Sigmoid colon (tissue), 7 donors: ENCODE measurements at regions of chr12 and their contacts with region 1.

Region 1: DNA sequence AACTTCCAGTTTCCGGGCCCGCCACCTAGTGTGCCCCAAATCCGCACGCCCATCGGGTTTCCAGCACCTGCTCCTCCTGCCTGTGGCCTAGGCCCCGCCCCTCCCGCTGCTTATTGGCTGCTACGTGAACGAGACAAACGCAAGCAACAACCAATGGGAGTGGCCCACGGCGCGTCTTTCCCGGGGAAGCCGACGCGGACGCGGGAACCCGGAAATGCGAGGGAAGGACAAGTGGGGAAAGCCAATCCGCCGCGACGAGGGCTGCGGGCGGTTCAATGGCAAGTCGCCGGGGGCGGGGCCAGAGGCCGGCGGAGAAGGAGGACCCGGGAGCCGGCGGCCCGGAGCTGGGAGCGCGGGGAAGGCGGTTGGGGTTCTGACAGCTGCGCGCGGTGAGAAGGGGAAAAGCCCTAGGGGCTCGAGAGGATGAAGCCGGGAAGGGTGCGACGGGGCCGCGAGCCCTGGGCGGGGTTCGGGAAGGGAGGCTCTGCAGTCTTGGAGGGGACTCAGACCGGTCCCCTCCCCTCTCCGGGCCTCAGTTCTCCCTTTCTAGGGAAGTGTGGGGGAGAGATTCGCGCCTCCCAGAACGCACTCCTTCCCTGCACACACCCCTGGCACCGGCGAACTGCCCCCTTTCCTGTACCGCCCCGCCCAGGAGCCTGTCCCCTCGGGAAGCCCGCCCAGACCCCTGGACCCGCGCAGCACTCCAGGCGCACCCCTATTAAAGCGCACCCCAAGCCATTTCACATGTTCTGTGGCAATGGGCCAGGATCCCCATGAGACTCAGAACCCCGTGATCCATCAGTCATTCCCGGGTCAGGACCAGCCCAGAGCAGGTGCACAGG is at the start of gene FICD:
- DNase-seq: peak; percentile 100
- H3K4me3 ChIP-seq: peak within 1 kb of the TSS; percentile 65 to 94 (median 80)
- H3K27ac ChIP-seq: peak within 1 kb of the TSS; percentile 76 to 88 (median 84)
- H3K4me1 ChIP-seq: peaks cover 0 to 22% (median 17%) of the 10 kb centered on the region in 4 donors
- H3K27me3 ChIP-seq: no peaks in the 10 kb centered on the region
- CTCF ChIP-seq: no peak
- EP300 ChIP-seq: no peak
- POLR2A ChIP-seq: peak in 1 of 2 donors; percentile 13
- total RNA-seq, gene FICD: 2.9 to 5.4 (median 4.1) TPM

Region 2: DNA sequence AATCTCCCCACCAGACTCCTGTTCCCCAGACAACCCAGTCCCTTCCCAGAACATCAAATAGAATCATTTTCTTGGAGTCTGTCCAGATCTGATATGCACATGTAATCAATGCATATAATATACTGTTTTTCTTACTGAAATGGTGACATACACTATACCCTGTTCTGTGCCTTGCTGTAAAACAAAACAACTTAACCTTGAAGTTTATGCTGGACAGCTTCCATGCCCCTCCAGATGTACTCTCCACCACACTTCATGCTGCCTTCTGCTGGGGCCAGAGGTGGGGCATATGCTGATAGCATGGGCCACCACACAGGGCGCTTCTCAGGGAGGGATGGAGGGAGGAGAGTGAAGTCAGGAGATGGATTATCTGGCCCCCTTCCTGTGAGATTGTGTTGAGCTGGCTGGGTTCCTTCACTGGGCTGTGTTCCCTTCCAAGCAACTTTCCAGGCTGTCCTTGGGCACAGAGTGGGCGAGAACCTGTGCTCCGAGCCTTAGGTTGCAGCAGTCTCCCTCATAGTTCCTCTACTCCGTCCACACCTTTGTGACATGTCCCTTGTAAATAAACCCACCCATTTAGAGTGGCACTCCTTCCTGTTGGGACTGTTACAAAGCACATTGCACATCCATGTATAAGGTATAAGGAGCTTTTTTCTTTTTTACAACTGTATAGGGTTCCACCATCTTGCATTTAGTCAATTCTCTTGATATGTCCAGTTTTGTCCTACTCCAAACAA is 1818.3 kb before region 1 on chr12:
- intact Hi-C with region 1: no loop called
- DNase-seq: no peak
- H3K4me3 ChIP-seq: no peak overlapping the region
- H3K27ac ChIP-seq: no peak overlapping the region
- H3K4me1 ChIP-seq: no peaks in the 10 kb centered on the region
- H3K27me3 ChIP-seq: no peaks in the 10 kb centered on the region
- CTCF ChIP-seq: no peak
- EP300 ChIP-seq: no peak
- POLR2A ChIP-seq: no peak

Region 3: DNA sequence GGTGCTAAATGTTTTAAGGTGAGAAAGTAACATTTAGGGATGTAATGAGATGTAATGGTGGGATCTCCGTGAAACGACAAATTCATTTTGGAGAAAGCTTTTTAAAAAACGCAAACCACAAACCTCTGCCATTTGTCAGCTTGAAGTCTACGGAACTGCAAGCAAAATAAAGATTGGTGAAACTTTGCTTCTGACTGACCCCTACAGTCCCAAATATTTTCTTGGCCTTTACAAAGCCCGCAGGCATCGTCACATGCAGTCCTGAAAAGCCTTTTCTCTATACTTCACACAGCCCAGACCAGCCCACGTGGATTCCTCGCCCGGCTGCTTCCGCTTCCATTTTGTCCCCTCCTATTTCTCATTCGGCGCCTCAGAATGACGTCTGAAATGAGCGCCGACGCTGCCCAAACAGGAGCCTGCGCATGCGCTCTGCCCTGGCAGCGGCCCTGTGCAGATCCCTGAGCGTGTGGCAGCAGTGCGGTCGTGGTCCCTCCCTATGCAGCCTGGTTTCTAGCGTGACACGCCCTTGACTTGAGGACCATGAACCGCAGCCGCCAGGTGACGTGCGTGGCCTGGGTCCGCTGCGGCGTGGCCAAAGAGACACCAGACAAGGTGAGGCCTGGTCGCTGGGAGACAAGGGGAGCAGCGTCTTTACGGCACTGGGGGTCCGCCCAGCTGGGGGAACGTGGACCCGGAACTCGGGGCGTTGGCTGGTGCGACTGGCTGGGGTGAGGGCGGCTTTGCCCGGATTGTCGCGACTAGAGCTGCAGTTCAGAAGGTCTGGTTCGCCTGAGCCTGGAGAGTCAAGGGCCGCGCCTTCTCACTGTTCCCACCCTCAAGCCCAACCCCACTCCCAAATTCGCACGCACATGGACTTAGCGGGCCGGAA is 829.6 kb before region 1 on chr12 and contains the start of gene PWP1:
- intact Hi-C with region 1: loop called (anchors 10 kb)
- DNase-seq: peak; percentile 95
- H3K4me3 ChIP-seq: peak within 1 kb of the TSS; percentile 66 to 95 (median 80)
- H3K27ac ChIP-seq: peak within 1 kb of the TSS; percentile 72 to 81 (median 78)
- H3K4me1 ChIP-seq: peaks cover 0 to 26% (median 18%) of the 10 kb centered on the region in 4 donors
- H3K27me3 ChIP-seq: peaks cover 0 to 5% (median 0%) of the 10 kb centered on the region in 3 donors
- CTCF ChIP-seq: no peak
- EP300 ChIP-seq: no peak
- POLR2A ChIP-seq: peak; percentile 62 to 66
- total RNA-seq, gene PWP1: 49.9 to 98.3 (median 75.8) TPM

Region 4: DNA sequence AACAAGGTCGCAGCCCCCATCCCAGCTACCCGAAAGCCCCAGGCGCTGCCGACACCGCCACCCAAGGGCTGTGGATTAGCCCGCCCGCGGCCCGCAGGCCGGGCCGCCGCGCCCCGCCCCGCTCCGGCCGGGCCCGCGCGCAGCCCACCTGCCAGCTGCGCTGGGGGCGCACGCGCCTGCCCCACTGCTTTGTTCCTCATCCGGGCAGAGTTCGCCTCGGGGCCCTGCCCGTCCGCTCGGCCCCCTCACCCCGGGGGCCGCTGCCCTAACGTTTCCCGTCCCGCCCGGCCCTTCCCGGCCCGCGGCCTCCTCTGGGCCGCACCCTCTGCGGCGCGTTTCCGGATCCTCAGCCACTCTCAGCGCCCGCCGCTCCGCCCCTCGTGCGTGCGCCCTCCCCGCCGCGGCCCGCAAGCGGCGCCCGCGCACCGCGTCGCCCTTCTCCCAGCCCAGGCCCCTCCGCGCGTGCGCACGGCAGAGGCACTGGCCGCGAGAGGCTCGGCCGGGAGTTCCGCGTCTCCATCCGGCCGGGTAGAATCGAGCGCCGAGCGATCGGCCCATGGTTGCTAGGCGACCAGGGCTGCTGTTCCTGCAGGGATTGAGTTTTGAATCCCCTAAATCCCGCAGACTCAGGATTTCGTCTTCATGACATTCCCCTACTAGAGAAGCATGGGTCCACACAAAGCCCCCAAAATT is 754.2 kb before region 1 on chr12 and contains the start of gene PRDM4:
- intact Hi-C with region 1: loop called (anchors 2 kb)
- DNase-seq: peak; percentile 97
- H3K4me3 ChIP-seq: peak within 1 kb of the TSS; percentile 84 to 94 (median 86)
- H3K27ac ChIP-seq: peak within 1 kb of the TSS; percentile 67 to 80 (median 76)
- H3K4me1 ChIP-seq: peaks cover 0 to 34% (median 25%) of the 10 kb centered on the region in 4 donors
- H3K27me3 ChIP-seq: no peaks in the 10 kb centered on the region
- CTCF ChIP-seq: peak in 1 of 4 experiments; percentile 29
- EP300 ChIP-seq: no peak
- POLR2A ChIP-seq: peak; percentile 46 to 54
- total RNA-seq, gene PRDM4: 19.7 to 25.7 (median 23.0) TPM

Region 5: DNA sequence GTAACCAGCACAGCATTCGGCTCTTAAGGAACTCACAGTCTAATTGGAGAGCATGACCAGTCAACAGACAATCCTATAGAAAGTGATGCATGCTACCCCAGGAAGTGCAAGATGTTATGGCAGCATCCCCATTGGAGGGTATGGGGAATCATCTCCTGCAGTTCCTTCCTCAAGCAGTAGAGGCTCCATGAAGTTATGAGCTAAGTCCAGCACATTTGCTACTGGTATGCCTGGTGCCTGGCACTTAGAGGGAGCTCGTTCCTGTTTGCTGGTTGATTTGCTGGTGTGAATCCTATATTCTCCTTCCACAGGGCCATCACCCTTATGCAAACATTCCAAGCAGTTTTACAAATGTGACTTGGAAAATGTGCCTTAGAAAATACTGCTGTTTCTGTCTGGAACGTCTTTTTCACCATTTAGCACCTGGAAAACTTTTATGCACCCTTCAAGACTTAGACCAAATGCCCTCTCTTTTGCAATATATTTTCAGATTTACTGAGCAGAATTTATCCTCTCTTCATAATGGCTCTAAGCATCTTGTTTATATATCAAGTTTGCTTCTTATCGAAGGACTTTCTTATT is 522.2 kb before region 1 on chr12:
- intact Hi-C with region 1: loop called (anchors 5 kb)
- DNase-seq: no peak
- H3K4me3 ChIP-seq: no peak overlapping the region
- H3K27ac ChIP-seq: no peak overlapping the region
- H3K4me1 ChIP-seq: no peaks in the 10 kb centered on the region
- H3K27me3 ChIP-seq: no peaks in the 10 kb centered on the region
- CTCF ChIP-seq: peak in 1 of 4 experiments; percentile 32
- EP300 ChIP-seq: no peak
- POLR2A ChIP-seq: no peak

Region 6: DNA sequence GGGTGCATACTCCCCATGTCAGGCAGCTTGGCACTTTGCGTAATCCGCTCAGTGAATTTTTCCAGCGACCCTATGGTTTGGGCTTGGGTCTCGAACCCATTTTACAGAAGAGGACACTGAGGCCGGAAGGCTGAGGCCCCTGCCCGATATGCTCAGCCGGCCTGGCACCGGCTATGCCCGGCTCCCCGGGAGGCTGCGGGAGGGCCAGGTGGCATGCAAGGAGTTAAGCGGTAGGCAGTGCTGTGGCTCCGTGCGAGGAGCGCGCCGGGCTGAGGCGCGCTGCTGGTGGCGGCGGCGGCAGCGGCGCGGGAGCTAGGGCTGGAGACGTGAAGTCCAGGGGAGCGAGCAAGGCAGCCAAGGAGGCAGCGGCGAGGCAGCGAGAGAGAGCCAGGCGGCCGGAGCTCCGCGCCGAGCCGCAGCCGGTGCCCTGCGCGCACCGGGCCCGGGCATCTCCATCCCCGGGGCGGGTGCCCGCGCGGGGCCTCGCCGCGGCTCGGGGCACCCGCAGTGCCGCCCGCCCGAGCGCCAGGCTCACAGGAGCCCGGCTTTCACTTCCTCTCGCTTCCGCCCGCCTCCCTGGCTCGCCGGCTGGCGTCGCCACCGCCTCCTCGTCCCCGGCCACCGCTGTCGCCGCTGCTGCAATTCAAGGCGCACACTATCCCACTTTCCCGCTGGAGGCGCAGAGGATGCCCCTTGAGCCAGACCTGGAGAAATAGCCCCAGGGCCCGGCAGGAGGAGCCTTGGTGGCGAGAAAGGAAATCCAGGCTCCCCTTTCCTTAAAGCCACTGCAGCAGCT is 386.0 kb before region 1 on chr12 and contains the start of gene WSCD2:
- intact Hi-C with region 1: loop called (anchors 5 kb)
- DNase-seq: peak; percentile 77
- H3K4me3 ChIP-seq: peak within 1 kb of the TSS; percentile 32 to 68 (median 53)
- H3K27ac ChIP-seq: peak within 1 kb of the TSS; percentile 71 to 92 (median 82)
- H3K4me1 ChIP-seq: peaks cover 0 to 47% (median 29%) of the 10 kb centered on the region in 4 donors
- H3K27me3 ChIP-seq: peaks cover 0 to 13% (median 0%) of the 10 kb centered on the region in 3 donors
- CTCF ChIP-seq: peak in 2 of 4 experiments; percentile 23 to 26
- EP300 ChIP-seq: no peak
- POLR2A ChIP-seq: no peak
- total RNA-seq, gene WSCD2: 1.6 to 10.5 (median 3.8) TPM

Region 7: DNA sequence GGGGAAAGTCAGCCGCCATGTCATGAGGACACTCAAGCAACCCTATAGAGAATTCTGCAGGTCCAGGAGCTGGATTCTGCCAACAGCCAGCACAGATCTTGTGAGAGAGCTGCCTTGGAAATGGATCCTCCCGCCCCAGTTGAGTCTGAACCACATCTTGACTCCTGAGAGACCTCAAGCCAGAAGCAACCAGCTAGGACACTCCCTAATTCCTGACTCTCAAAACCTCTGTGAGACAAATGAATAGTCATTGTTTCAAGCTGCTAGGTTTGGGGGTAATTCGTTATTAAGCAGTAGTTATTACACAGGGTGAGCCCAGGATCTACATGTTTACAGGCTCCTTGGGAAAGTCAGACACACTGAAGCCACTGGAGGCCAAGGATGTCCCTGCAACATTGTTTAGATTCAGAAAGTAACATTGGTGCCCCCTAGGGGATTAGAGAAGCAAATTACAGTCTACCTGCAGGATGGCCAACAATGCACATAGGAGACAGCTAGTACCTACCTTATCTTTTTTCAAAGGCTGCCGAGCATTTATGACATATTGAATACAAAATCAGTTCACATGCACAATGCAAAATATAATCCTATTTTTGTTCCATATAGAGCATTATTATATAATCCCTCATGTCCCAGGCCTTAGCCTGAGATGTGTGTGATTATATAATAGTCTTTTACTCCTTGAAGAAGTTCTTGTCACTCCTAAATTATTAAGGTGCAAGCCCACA is 58.0 kb before region 1 on chr12:
- intact Hi-C with region 1: no loop called
- DNase-seq: no peak
- H3K4me3 ChIP-seq: no peak overlapping the region
- H3K27ac ChIP-seq: no peak overlapping the region
- H3K4me1 ChIP-seq: no peaks in the 10 kb centered on the region
- H3K27me3 ChIP-seq: peaks cover 0 to 1% (median 0%) of the 10 kb centered on the region in 3 donors
- CTCF ChIP-seq: peak in 3 of 4 experiments; percentile 45 to 46 (median 46)
- EP300 ChIP-seq: no peak
- POLR2A ChIP-seq: no peak